RWPE1 (cell line): ENCODE measurements at regions of chr2 and their contacts with region 1.

Region 1: DNA sequence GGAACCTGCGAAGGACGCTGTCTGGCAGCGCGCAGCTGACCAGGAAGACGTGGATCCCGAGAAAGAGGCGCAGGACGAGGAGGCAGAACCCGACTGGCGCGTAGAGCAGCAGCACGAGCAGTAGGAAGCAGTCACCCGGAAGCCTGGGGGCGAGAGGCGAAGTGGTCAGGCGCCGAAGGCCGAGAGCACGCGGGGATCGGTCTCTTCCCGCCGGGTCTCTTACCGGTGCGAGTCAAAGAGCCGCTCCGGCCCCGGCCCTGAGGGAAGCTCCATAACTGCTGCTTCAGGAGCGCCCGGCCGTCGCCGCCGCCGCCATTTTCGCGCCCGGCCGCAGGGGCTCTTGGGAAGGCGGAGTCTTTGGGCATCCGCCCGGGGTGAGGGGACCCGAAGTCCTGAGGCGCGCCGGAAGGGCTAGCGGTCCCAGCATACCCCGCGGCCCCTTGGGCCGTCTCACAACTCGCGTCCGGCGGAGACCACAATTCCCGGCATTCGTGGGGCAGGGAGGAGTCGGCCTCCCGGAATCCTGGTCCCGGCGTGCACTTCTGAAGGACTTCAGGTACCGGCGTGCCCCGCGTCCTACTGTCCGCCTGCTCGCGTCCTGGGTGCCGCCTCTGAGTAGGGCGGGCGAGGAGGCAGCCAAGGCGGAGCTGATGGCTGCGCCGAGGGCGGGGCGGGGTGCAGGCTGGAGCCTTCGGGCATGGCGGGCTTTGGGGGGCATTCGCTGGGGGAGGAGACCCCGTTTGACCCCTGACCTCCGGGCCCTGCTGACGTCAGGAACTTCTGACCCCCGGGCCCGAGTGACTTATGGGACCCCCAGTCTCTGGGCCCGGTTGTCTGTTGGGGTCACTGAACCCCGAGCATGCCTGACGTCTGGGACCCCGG is at the starts of genes AUP1 and HTRA2:
- DNase-seq: peak; percentile 99
- H3K27ac ChIP-seq: peak within 1 kb of the TSS; percentile 83
- CTCF ChIP-seq: no peak

Region 2: DNA sequence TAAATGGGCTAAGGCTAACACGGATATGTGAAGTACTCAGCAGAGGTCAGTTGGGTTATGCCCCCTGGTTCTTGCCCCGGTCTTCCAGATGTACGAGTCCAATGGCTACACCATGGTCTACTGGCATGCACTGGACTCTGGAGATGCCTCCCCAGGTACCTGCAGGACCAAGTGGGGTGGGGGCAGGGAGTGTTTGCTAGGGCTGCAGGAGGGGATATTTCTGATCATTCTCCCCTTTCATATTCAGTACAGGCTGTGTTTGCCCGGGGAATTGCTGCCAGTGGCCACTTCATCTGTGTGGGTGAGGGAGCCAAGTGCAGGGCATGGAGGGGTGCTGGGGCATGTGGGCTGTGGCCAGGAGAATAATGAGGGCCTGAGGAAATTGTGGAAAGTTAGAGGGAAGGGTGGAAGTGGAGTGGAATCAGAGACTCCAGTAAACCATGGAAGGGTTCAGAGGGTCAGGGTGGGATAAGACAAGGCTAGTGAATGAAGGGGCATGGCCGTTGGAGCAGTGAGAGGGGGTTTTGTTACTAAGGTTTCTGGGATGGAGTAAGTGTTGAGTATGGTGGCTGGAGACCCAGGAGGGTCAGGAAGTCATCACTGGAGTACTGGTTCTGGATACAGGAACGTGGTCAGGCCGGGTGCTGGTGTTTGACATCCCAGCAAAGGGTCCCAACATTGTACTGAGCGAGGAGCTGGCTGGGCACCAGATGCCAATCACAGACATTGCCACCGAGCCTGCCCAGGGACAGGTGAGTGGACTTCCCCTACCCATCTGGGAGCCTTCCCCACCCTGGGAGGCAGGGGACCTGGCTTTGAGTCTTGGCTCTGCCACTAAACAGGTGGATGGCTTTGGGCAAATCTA is 106.1 kb before region 1 on chr2:
- CTCF ChIA-PET with region 1: no interaction called
- POLR2A ChIA-PET with region 1: no interaction called
- DNase-seq: no peak
- H3K27ac ChIP-seq: peak overlapping the region; percentile 94
- CTCF ChIP-seq: no peak

Region 3: GRCh38 chr2:74510272-74510671 is 19.3 kb before region 1 on chr2:
- CTCF ChIA-PET with region 1: interaction called, 7 read pairs
- POLR2A ChIA-PET with region 1: interaction called, 12 read pairs
- DNase-seq: no peak
- H3K27ac ChIP-seq: no peak overlapping the region
- CTCF ChIP-seq: no peak

Region 4: GRCh38 chr2:74619651-74620297 is 90.2 kb after region 1 on chr2:
- CTCF ChIA-PET with region 1: no interaction called
- POLR2A ChIA-PET with region 1: no interaction called
- DNase-seq: no peak
- H3K27ac ChIP-seq: no peak overlapping the region
- CTCF ChIP-seq: no peak